ENCODE measurements at regions of chr12 and their contacts with region 1.

Region 1: DNA sequence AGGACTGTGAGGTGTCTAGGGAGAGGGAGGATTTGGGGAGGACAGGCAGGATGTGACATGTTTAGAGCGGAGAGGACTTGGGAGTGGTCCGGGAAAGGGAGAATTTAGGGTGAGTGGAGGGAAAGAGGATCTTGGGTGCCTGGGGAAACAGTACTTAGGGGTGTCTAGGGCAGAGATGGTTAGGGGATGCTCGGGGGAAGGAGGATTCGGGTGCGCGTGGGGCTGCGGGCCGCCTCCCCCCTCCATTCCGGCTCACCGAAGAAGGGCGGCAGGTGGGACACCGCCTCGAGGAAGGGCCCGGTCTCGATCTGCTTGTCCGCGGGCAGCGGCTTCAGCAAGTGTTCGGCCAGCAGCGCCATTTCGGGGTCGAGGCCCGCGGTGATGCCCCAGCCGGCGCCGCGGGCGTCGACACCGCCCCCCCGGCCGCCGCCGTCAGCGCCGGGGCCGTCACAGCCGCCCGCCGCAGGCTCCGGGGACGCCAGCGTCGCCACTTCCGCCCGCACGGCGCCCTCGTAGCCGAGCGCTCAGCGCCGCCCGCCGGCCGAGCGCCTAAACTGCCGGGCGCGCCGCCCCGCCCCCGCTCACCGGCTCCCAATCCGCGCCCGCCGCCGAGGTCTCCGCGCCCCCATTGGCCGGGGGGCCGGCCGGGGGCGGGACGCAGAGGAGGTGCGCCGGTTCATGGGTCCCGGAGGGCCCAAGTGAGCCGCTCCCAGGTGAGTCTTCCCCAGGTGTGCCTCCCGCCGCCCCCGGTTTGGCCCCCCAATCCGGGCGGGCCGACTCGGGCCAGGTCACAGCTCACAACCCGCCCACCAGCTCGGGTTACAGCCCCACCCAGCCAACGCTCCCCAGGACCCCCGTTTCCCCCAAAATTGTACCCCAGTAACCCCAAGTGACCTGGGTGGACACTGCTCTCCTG is at the start of gene GLTP:
- DNase-seq: peak; percentile 82 to 96 (median 89)
- ATAC-seq: peak; percentile 98
- H3K4me3 ChIP-seq: peak within 1 kb of the TSS; percentile 96 to 97
- H3K4me3 Mint-ChIP-seq: peak within 1 kb of the TSS; percentile 96
- H3K27ac ChIP-seq: peak within 1 kb of the TSS; percentile 86 to 92
- H3K27ac Mint-ChIP-seq: peak within 1 kb of the TSS; percentile 93
- H3K4me1 ChIP-seq: peaks cover 26% of the 10 kb centered on the region
- H3K4me1 Mint-ChIP-seq: peaks cover 46% of the 10 kb centered on the region
- H3K27me3 ChIP-seq: no peaks in the 10 kb centered on the region
- H3K27me3 Mint-ChIP-seq: no peaks in the 10 kb centered on the region
- CTCF ChIP-seq: peak; percentile 48
- total RNA-seq, gene GLTP: 36.9 to 40.7 TPM

Region 2: DNA sequence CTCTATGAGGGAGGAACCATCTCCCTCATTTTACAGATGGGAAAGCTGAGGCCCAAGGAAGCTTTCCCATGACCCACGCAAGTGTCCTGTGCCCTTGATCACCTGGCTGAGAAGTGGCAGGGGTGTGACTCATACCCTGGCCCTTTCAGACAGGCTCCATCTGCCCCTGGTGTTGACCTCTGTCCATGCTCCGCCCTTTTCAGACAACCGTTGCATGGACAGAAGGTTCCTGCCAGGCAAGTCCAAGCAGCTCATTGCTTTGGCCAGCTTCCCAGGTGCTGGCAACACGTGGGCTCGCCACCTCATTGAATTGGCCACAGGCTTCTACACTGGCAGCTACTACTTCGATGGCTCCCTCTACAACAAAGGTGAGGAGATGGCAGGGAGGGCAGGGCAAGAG is 1647.7 kb before region 1 on chr12:
- CTCF ChIA-PET with region 1: no interaction called
- POLR2A ChIA-PET with region 1: no interaction called
- intact Hi-C with region 1: no loop called
- DNase-seq: no peak
- ATAC-seq: no peak
- H3K4me3 ChIP-seq: no peak overlapping the region
- H3K4me3 Mint-ChIP-seq: no peak overlapping the region
- H3K27ac ChIP-seq: no peak overlapping the region
- H3K27ac Mint-ChIP-seq: no peak overlapping the region
- H3K4me1 ChIP-seq: no peaks in the 10 kb centered on the region
- H3K4me1 Mint-ChIP-seq: no peaks in the 10 kb centered on the region
- H3K27me3 ChIP-seq: no peaks in the 10 kb centered on the region
- H3K27me3 Mint-ChIP-seq: peaks cover 31% of the 10 kb centered on the region
- CTCF ChIP-seq: no peak

Region 3: GRCh38 chr12:109428037-109428629 is 452.1 kb before region 1 on chr12:
- CTCF ChIA-PET with region 1: no interaction called
- POLR2A ChIA-PET with region 1: no interaction called
- intact Hi-C with region 1: loop called in 1 of 2 experiments (anchors 1 kb)
- DNase-seq: peak; percentile 39 to 84 (median 73)
- ATAC-seq: peak; percentile 81
- H3K4me3 ChIP-seq: no peak overlapping the region
- H3K4me3 Mint-ChIP-seq: no peak overlapping the region
- H3K27ac ChIP-seq: no peak overlapping the region
- H3K27ac Mint-ChIP-seq: no peak overlapping the region
- H3K4me1 ChIP-seq: peaks cover 3% of the 10 kb centered on the region
- H3K4me1 Mint-ChIP-seq: peaks cover 6% of the 10 kb centered on the region
- H3K27me3 ChIP-seq: no peaks in the 10 kb centered on the region
- H3K27me3 Mint-ChIP-seq: peaks cover 6% of the 10 kb centered on the region
- CTCF ChIP-seq: peak; percentile 93

Region 4: GRCh38 chr12:109518820-109519665 is 361.2 kb before region 1 on chr12:
- CTCF ChIA-PET with region 1: no interaction called
- POLR2A ChIA-PET with region 1: no interaction called
- intact Hi-C with region 1: loop called in 1 of 2 experiments (anchors 2 kb)
- DNase-seq: peak; percentile 19 to 66 (median 55)
- ATAC-seq: no peak
- H3K4me3 ChIP-seq: no peak overlapping the region
- H3K4me3 Mint-ChIP-seq: no peak overlapping the region
- H3K27ac ChIP-seq: no peak overlapping the region
- H3K27ac Mint-ChIP-seq: no peak overlapping the region
- H3K4me1 ChIP-seq: no peaks in the 10 kb centered on the region
- H3K4me1 Mint-ChIP-seq: no peaks in the 10 kb centered on the region
- H3K27me3 ChIP-seq: no peaks in the 10 kb centered on the region
- H3K27me3 Mint-ChIP-seq: no peaks in the 10 kb centered on the region
- CTCF ChIP-seq: peak; percentile 70

Region 5: DNA sequence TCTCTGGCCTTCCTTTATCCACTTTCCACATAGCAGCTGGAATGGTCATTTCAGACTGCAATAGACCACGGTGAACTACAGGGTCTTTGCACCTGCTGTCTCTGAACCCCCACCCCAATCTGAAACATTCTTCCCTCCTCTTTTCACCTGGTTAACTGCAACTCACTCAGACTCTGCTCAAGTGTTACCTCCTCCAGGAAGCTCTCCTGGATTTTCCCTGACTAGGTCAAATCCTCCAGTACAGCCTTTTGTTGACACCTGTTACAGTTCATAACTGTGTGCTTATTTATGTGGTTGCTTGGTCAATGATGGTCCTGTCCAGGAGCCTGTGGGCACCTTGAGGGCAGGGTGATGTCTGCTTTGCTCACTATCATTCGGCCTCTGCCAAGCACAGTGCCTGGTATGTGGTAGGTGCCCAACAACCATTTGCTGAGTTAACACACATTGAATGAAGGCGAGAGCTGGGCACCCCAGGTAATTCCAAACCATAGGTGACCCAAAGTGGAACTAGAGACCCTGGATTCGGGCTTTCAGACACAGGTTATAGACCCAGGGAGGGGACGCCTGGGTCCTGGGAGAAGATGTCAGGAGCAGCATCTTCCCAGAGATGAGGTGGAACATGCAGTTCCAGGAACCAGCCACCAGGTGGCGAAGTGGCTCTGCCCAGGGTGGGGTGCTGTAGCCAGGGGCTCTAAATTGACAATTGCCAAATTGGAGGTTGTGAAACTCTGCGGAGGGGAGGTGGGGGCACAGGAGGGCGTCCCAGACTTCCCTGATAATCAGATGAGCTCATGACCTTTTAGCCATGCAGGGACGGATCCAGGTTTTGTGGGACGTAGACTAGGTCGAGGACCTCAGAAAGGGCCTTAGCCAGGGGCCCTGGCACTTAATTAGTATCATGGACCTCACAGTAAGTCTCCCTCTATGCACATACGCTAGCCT is 75.2 kb before region 1 on chr12:
- CTCF ChIA-PET with region 1: interaction called, 23 read pairs
- POLR2A ChIA-PET with region 1: no interaction called
- intact Hi-C with region 1: loop called in 1 of 2 experiments (anchors 1 kb)
- DNase-seq: peak; percentile 47 to 82 (median 72)
- ATAC-seq: peak; percentile 96
- H3K4me3 ChIP-seq: no peak overlapping the region
- H3K4me3 Mint-ChIP-seq: no peak overlapping the region
- H3K27ac ChIP-seq: no peak overlapping the region
- H3K27ac Mint-ChIP-seq: no peak overlapping the region
- H3K4me1 ChIP-seq: no peaks in the 10 kb centered on the region
- H3K4me1 Mint-ChIP-seq: no peaks in the 10 kb centered on the region
- H3K27me3 ChIP-seq: peaks cover 0 to 2% of the 10 kb centered on the region in 2 experiments
- H3K27me3 Mint-ChIP-seq: peaks cover 2% of the 10 kb centered on the region
- CTCF ChIP-seq: peak; percentile 98

Region 6: DNA sequence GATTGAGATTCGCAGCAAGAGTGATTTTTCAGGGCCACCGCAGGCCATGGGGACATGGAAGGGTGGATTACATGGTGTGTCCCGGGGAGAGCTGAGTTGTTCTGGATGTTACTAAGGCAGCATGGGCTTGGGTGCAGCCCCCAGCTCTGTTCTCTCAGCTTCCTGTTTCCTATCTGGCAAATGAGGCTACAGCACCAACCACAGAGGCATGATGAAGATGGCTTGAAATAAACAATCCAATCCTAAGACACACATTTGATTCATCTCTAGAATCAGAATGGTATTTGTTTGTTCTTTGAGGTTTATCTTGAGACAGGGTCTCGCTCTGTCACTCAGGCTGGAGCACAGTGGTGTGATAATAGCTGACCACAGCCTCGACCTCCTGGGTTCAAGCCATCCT is 21.5 kb before region 1 on chr12:
- CTCF ChIA-PET with region 1: interaction called, 16 read pairs
- POLR2A ChIA-PET with region 1: no interaction called
- intact Hi-C with region 1: loop called (anchors 1 kb)
- DNase-seq: no peak
- ATAC-seq: no peak
- H3K4me3 ChIP-seq: no peak overlapping the region
- H3K4me3 Mint-ChIP-seq: no peak overlapping the region
- H3K27ac ChIP-seq: no peak overlapping the region
- H3K27ac Mint-ChIP-seq: no peak overlapping the region
- H3K4me1 ChIP-seq: peaks cover 2% of the 10 kb centered on the region
- H3K4me1 Mint-ChIP-seq: peaks cover 11% of the 10 kb centered on the region
- H3K27me3 ChIP-seq: no peaks in the 10 kb centered on the region
- H3K27me3 Mint-ChIP-seq: no peaks in the 10 kb centered on the region
- CTCF ChIP-seq: no peak

Region 7: DNA sequence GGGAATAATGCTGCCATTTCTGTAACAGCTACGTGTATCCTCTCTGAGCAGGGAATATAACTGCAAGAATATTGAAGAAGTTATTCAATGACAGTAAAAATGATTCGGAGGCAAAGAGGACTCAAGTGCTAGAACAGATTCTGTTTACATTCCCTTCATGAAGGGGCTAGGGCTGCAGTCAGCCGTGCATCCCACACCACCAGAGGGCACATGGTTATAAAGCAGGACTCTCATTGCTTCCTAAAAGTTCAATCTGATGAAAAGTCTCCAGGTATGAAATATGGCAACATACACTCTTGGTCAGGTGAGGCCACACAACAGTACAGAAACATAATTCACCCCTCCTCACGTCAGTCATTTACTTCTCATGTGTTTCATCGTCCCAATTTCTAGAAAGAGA is 53.8 kb after region 1 on chr12:
- CTCF ChIA-PET with region 1: no interaction called
- POLR2A ChIA-PET with region 1: no interaction called
- intact Hi-C with region 1: no loop called
- DNase-seq: no peak
- ATAC-seq: no peak
- H3K4me3 ChIP-seq: no peak overlapping the region
- H3K4me3 Mint-ChIP-seq: no peak overlapping the region
- H3K27ac ChIP-seq: no peak overlapping the region
- H3K27ac Mint-ChIP-seq: no peak overlapping the region
- H3K4me1 ChIP-seq: no peaks in the 10 kb centered on the region
- H3K4me1 Mint-ChIP-seq: no peaks in the 10 kb centered on the region
- H3K27me3 ChIP-seq: no peaks in the 10 kb centered on the region
- H3K27me3 Mint-ChIP-seq: no peaks in the 10 kb centered on the region
- CTCF ChIP-seq: no peak

Region 8: DNA sequence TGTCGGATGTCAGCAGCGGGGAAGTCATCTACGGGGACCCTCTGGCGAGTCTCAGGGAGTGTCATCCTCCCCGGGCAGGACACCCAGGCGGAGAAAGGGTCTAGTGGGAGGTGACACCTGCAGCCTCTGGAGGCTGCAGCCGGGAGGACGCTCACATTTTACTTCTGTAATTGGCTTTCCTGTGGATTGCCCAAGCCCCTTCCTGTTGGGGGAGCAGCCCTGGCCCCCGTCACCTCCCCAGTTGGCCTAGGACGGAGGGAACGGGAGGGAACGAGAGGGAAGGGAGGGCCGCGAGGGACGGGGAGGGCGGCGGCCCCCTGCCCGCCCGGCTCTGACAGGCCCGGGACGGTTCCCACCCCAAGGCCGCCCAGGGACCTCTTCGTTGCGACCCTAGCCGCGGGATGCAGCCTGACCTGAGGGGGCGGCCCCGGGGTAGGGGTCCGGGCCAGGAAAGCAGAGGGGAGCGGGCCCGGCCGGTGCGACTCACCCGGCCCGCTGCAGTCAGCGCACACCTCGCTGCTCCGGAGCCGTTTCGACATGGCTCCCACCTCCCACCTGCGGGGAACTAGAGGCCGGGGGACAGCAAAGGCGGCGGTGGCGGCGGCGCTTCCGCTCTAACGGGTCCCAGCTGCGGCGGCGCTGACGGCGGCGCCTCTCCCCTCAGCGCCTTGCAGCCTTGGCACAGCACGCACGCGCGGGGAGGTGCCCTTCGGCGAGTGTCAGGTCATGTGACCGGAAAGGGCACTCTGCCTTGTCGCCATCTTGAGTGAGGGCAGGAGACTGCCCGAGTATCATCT is 115.6 kb after region 1 on chr12 and contains the start of gene GIT2:
- CTCF ChIA-PET with region 1: no interaction called
- POLR2A ChIA-PET with region 1: no interaction called
- intact Hi-C with region 1: loop called (anchors 1 kb)
- DNase-seq: peak; percentile 87 to 98 (median 94)
- ATAC-seq: peak; percentile 76
- H3K4me3 ChIP-seq: peak within 1 kb of the TSS; percentile 79 to 89
- H3K4me3 Mint-ChIP-seq: peak within 1 kb of the TSS; percentile 97
- H3K27ac ChIP-seq: peak within 1 kb of the TSS; percentile 70 to 85
- H3K27ac Mint-ChIP-seq: peak within 1 kb of the TSS; percentile 89
- H3K4me1 ChIP-seq: peaks cover 34% of the 10 kb centered on the region
- H3K4me1 Mint-ChIP-seq: peaks cover 71% of the 10 kb centered on the region
- H3K27me3 ChIP-seq: no peaks in the 10 kb centered on the region
- H3K27me3 Mint-ChIP-seq: no peaks in the 10 kb centered on the region
- CTCF ChIP-seq: no peak
- total RNA-seq, gene GIT2: 47.6 to 57.9 TPM

Region 9: DNA sequence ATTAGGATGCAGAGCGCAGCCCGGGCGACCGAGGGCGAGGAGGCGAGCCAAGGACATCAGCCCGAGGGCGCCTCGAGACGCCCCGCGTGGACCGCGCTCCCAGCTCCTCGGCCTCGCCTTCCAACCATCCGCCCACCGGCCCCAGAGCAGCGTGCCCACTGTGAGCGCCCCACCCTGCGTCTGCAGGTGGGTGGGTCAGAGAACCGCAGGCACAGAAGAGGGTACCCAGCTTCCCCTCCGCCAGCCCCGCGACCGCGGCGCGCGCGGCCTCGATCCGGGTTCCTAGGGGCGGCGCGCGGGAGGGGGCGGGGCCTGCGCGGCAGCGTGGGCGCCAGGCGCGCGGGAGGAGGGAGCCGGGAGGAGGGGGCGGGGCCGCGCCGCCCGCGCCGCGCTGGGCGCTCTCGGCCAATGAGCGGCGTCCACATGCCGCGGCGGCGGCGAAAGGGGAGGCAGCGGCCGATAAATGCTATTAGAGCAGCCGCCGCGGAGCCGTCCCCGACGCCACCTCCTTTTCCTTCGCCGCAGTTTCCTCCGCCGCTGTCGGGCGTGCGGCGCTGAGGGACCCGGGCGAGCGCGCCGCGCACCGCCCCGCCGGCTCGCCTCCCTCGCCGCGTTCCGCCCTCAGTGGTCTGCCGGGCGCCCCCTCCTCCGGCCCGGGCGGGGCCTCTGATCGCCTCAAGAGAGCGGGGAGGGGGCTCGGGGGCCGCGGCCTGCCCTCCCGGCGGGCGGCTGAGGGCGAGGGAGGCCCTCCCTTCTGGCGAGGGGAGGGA is 400.7 kb after region 1 on chr12 and contains the start of gene ATP2A2:
- CTCF ChIA-PET with region 1: no interaction called
- POLR2A ChIA-PET with region 1: no interaction called
- intact Hi-C with region 1: loop called in 1 of 2 experiments (anchors 5 kb)
- DNase-seq: peak; percentile 75 to 97 (median 90)
- ATAC-seq: peak; percentile 89
- H3K4me3 ChIP-seq: peak within 1 kb of the TSS; percentile 60 to 82
- H3K4me3 Mint-ChIP-seq: peak within 1 kb of the TSS; percentile 91
- H3K27ac ChIP-seq: peak within 1 kb of the TSS; percentile 70 to 77
- H3K27ac Mint-ChIP-seq: peak within 1 kb of the TSS; percentile 94
- H3K4me1 ChIP-seq: peaks cover 35% of the 10 kb centered on the region
- H3K4me1 Mint-ChIP-seq: peaks cover 46% of the 10 kb centered on the region
- H3K27me3 ChIP-seq: no peaks in the 10 kb centered on the region
- H3K27me3 Mint-ChIP-seq: no peaks in the 10 kb centered on the region
- CTCF ChIP-seq: no peak
- total RNA-seq, gene ATP2A2: 100 to 105 TPM

Measured in CD8-positive, alpha-beta T cell (primary cell).